A673 (cell line): ENCODE measurements at regions of chr1 and their contacts with region 1.

Region 1: DNA sequence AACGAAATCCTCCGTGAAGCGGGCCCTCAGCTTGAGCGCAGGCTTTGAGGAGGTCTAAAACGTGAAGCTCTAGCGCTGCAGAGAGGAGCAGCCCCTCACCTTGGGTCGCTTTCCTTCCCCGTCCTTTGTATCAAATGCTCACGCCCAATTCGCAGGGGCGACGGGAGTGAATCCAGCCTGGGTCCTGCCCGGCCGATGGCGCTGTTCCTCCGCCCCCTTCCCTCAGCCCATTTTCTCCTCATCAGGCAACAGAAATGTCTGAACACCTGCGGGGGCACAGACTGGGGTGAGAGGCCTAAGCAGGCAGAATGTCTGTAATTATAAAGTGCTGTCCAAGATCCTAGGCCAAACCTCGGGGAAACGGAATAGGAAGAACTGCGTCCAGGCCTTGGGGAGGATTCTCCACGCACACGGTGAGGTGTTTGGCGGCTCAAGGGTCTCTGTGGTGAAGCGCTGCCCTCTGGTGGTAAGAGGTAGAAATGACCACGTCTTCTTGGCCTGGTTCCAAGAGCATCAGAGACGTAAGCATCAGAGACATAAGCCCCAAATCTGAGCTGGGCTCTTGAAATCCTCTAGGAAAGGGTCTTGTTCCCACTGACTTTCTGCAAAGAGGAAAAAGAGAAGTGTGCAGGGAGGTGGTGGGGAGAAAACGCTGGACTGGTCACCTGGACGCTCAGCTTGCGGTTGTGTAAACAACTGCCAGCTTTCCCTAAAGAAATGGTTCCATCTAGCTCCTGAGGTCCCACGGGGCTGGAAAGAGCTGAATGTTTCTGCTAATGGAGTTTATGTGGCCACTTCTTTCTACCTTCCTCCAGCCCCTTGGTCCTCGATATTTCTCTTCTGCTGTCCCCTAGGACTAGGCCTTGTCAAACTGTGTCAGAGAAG is 92.1 kb upstream of the CD53 start:
- DNase-seq: peak; percentile 89
- H3K4me3 ChIP-seq: no peak overlapping the region
- H3K27ac ChIP-seq: no peak overlapping the region
- H3K4me1 ChIP-seq: peaks cover 28% of the 10 kb centered on the region
- H3K27me3 ChIP-seq: peaks cover 3% of the 10 kb centered on the region
- CTCF ChIP-seq: peak; percentile 82

Region 2: DNA sequence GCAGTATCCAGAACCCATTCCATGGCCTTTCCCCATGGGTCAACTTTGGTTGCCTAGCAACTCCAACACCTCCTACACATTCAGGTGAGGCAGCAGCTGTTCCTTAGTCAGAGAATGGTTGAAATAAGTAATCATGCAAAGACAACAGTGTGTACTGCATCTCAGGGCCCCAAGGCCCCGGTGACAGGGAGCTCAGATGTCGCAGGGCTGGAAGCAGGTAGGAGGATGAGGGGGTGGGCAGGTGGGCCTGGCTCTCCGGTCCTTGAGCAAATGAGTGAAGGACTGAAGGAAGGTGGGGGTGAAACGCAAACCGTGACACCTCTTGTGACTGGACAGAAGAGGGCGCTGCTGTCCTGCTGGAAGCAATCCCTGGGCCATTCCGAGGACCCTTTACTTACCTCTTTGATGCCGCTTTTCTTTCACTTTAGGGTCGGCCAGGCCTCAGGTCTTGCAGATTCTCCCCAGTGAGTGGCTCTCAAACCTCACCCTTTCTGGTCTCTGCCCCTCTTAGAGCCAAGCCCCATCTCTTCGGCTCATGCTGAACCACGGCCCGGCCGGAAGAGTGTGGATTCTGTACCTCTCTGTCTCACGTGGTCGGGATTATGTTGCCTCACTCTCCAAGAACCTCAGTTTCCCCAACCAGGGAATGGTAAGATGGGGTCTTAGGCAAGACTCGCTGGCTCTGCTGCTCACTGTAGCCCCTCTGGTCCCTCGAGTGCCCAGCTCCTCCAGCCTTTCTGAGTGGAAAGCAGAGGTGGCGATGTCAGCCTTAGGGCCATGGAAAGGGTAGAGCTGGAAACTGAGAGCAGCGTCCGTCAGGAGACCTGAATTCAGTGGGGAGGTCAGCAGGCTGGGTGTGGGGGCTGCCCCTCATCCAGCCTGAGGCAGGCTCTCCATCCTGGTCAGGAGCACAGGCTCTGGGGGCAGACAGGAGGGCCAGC is 256.3 kb before region 1 on chr1:
- CTCF ChIA-PET with region 1: no interaction called
- POLR2A ChIA-PET with region 1: no interaction called
- intact Hi-C with region 1: loop called (anchors 2 kb)
- DNase-seq: peak; percentile 72
- H3K4me3 ChIP-seq: no peak overlapping the region
- H3K27ac ChIP-seq: no peak overlapping the region
- H3K4me1 ChIP-seq: no peaks in the 10 kb centered on the region
- H3K27me3 ChIP-seq: no peaks in the 10 kb centered on the region
- CTCF ChIP-seq: peak; percentile 93

Region 3: DNA sequence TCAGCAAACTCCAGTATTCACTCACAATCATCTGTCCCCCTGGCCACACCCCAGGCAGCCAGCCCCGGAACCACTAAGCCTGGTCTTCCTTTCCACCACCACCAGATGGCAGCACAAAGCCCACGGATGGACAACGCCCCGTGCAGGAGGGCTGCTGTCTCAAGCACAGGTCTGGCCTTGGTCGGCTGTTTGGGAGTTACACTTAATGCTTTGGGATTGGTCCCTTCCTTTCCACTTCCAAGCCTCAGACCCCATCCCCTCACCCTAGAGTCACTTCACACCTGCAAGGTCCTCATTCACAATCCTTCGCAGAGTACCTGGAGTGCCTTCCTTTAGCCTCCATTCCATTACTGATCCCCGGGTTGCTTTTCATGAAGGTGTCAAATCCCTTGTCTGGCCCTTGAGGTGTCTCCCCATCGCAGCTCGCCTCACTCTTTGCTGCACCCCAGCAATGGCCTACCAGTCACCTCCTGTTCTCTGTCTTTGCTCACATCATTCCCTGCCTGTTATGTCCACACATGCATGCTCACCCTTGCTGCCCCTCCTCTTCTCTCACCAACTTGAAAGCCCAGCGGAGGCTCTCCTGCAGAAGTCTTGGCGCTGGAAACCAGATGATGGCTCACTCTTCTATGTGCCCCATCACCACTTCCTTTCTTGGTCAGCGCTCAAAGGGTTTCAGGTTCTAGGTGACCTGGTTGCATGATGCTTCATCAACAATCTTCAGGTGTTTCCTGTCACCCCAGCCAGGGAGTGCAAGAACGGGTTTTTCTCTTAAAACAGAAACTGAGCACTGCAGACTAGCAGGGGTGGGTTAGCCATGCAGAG is 149.8 kb before region 1 on chr1:
- CTCF ChIA-PET with region 1: no interaction called
- POLR2A ChIA-PET with region 1: no interaction called
- intact Hi-C with region 1: loop called (anchors 2 kb)
- DNase-seq: peak; percentile 85
- H3K4me3 ChIP-seq: no peak overlapping the region
- H3K27ac ChIP-seq: no peak overlapping the region
- H3K4me1 ChIP-seq: peaks cover 11% of the 10 kb centered on the region
- H3K27me3 ChIP-seq: no peaks in the 10 kb centered on the region
- CTCF ChIP-seq: peak; percentile 93

Region 4: DNA sequence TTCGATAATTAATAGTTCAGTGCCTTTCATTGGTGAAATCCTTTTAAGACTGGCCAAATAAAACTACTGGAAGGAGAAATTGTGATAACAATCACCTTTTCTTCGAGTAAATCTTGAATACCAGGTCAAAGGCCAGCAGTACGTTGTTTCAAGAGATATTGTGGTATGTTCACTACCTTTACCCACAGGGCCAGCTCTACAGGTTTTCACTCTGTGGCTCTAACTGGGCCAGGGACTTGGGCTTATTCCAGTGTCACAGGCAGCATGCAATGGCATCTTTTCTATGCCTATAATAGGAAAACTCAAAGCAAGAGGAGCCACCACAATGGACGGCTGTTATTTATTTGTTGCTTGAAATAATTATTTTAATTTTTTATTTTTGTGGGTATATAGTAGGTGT is 209.7 kb after region 1 on chr1:
- CTCF ChIA-PET with region 1: interaction called, 3 read pairs
- POLR2A ChIA-PET with region 1: no interaction called
- intact Hi-C with region 1: loop called (anchors 5 kb)
- DNase-seq: no peak
- H3K4me3 ChIP-seq: no peak overlapping the region
- H3K27ac ChIP-seq: no peak overlapping the region
- H3K4me1 ChIP-seq: no peaks in the 10 kb centered on the region
- H3K27me3 ChIP-seq: peaks cover 30% of the 10 kb centered on the region
- CTCF ChIP-seq: no peak